Right lobe of liver (tissue), 6 donors: ENCODE measurements at regions of chr1 and their contacts with region 1.

Region 1: GRCh38 chr1:45299981-45300668 is 26.6 kb upstream of the HPDL start:
- DNase-seq: no peak
- ATAC-seq: peak in 1 of 4 donors; percentile 8
- H3K4me3 ChIP-seq: no peak overlapping the region
- H3K27ac ChIP-seq: no peak overlapping the region
- H3K4me1 ChIP-seq: peaks cover 0 to 10% (median 2%) of the 10 kb centered on the region in 4 donors
- H3K27me3 ChIP-seq: no peaks in the 10 kb centered on the region
- CTCF ChIP-seq: peak; percentile 70 to 79 (median 78)
- POLR2A ChIP-seq: no peak

Region 2: GRCh38 chr1:45018599-45019230 is 281.4 kb before region 1 on chr1:
- intact Hi-C with region 1: loop called (anchors 5 kb)
- DNase-seq: peak; percentile 62 to 65 (median 63)
- ATAC-seq: peak; percentile 94 to 96 (median 95)
- H3K4me3 ChIP-seq: no peak overlapping the region
- H3K27ac ChIP-seq: no peak overlapping the region
- H3K4me1 ChIP-seq: peaks cover 0 to 2% (median under 1%) of the 10 kb centered on the region in 4 donors
- H3K27me3 ChIP-seq: no peaks in the 10 kb centered on the region
- CTCF ChIP-seq: peak; percentile 76 to 83 (median 78)
- POLR2A ChIP-seq: no peak